ENCODE measurements at regions of chr2 and their contacts with region 1.

Region 1: DNA sequence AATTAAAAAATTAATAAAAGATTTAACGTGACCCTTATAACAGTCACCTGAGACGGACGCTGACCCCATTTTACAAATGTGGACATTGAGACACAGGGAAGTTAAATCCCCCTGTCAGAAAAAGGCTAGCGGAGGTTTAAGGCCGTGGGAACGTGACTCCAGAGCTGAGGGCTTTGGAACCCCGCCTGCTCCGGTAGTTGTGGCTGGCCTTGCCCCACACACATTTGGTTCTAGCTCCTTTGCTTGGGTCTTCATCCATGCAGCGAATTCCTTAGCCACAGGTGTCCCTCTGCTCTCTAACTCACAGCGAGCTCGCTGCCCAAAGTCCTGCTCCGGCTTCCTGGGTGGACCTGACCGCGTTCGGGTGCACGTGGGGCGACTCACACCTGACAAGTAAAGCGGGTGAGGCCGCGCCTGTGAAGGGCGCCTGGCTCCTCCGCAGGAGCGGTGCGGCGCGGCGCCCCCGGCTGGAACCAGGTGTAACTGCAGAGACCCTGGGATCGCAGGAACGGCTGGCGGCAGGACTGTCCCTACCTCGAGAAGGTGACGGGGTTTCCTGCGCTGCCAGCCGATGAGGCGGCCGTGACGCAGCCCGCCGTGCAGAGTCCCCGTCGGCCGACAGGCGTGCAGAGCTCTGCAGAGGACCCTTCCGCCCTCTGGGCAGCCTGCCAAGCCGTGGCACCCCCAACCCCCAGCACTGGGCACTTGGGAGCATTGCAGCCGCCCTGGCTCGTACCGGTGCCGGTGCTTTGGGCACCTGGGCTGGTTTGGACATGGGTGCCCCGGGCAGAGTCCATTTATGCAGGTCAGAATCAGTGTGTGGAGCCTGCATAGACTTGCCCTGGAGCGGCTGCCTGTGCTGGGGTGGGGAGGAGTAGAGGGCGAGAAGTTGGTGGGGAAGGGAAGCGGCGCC is 2.4 kb upstream of the PROC start:
- DNase-seq: peak; percentile 65 to 91 (median 85)
- ATAC-seq: peak; percentile 94
- H3K4me3 ChIP-seq: peak overlapping the region; percentile 63 to 69
- H3K4me3 Mint-ChIP-seq: peak overlapping the region; percentile 84
- H3K27ac ChIP-seq: no peak overlapping the region
- H3K27ac Mint-ChIP-seq: peak overlapping the region; percentile 77
- H3K4me1 ChIP-seq: peaks cover 11% of the 10 kb centered on the region
- H3K4me1 Mint-ChIP-seq: peaks cover 20% of the 10 kb centered on the region
- H3K27me3 ChIP-seq: no peaks in the 10 kb centered on the region
- H3K27me3 Mint-ChIP-seq: no peaks in the 10 kb centered on the region
- CTCF ChIP-seq: peak; percentile 82

Region 2: DNA sequence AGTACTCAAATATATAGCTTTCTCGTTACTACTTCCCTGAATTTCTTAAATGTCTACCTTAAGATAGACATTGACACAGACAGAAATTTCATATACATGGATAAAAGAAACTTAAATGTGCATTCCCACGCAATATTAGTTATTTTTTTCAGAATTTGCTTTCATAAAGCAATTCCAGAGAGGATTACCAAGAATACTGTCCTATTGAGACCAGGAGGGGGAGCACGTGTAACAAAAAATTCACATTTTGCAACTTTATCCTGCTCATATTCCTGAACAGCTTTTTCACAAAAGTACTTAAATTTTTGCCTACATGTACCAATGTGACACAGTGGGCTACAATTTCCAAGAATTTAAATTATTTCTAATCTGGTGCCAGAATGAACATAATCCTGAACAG is 91.2 kb before region 1 on chr2:
- CTCF ChIA-PET with region 1: interaction called, 12 read pairs
- POLR2A ChIA-PET with region 1: no interaction called
- intact Hi-C with region 1: no loop called
- DNase-seq: peak in 2 of 9 experiments; percentile 17 to 28
- ATAC-seq: no peak
- H3K4me3 ChIP-seq: no peak overlapping the region
- H3K4me3 Mint-ChIP-seq: no peak overlapping the region
- H3K27ac ChIP-seq: no peak overlapping the region
- H3K27ac Mint-ChIP-seq: no peak overlapping the region
- H3K4me1 ChIP-seq: no peaks in the 10 kb centered on the region
- H3K4me1 Mint-ChIP-seq: no peaks in the 10 kb centered on the region
- H3K27me3 ChIP-seq: no peaks in the 10 kb centered on the region
- H3K27me3 Mint-ChIP-seq: no peaks in the 10 kb centered on the region
- CTCF ChIP-seq: no peak

Region 3: DNA sequence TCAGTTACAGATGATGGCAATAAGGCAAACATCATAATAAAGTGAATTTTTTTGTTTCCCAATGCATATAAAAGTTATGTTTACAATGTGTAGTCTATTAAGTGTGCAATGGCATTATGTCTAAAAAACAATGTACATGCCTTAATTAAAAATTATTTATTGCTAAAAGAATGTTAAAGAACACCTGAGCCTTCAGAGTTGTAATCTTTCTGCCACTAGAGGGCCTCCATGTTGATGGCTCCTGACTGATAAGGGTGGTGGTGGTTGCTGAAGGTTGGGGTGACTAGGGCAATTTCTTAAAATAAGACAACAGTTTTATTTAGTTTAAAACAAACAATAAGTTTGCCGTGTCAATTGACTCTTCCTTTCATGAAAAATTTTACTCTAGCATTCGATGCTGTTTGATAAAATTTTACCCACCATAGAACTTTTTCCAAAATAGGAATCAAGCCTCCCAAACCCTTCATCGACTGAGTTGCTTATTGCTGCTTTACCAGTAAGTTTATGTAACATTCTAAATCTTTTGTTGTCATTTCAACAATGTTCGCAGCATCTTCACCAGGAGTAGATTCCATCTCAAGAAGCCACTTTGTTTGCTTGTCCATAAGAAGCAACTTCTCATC is 60.4 kb before region 1 on chr2:
- CTCF ChIA-PET with region 1: interaction called, 7 read pairs
- POLR2A ChIA-PET with region 1: no interaction called
- intact Hi-C with region 1: loop called (anchors 1 kb)
- DNase-seq: peak in 6 of 9 experiments; percentile 5 to 71 (median 38)
- ATAC-seq: peak; percentile 74
- H3K4me3 ChIP-seq: no peak overlapping the region
- H3K4me3 Mint-ChIP-seq: no peak overlapping the region
- H3K27ac ChIP-seq: no peak overlapping the region
- H3K27ac Mint-ChIP-seq: no peak overlapping the region
- H3K4me1 ChIP-seq: peaks cover 4% of the 10 kb centered on the region
- H3K4me1 Mint-ChIP-seq: peaks cover 68% of the 10 kb centered on the region
- H3K27me3 ChIP-seq: no peaks in the 10 kb centered on the region
- H3K27me3 Mint-ChIP-seq: no peaks in the 10 kb centered on the region
- CTCF ChIP-seq: peak; percentile 79

Region 4: GRCh38 chr2:127379712-127380355 is 36.0 kb before region 1 on chr2:
- CTCF ChIA-PET with region 1: interaction called, 3 read pairs
- POLR2A ChIA-PET with region 1: no interaction called
- intact Hi-C with region 1: loop called in 1 of 2 experiments (anchors 5 kb)
- DNase-seq: no peak
- ATAC-seq: no peak
- H3K4me3 ChIP-seq: no peak overlapping the region
- H3K4me3 Mint-ChIP-seq: no peak overlapping the region
- H3K27ac ChIP-seq: no peak overlapping the region
- H3K27ac Mint-ChIP-seq: no peak overlapping the region
- H3K4me1 ChIP-seq: peaks cover 26% of the 10 kb centered on the region
- H3K4me1 Mint-ChIP-seq: peaks cover 68% of the 10 kb centered on the region
- H3K27me3 ChIP-seq: no peaks in the 10 kb centered on the region
- H3K27me3 Mint-ChIP-seq: no peaks in the 10 kb centered on the region
- CTCF ChIP-seq: no peak